Body of pancreas (tissue), 4 donors: ENCODE measurements at regions of chr1 and their contacts with region 1.

Region 1: DNA sequence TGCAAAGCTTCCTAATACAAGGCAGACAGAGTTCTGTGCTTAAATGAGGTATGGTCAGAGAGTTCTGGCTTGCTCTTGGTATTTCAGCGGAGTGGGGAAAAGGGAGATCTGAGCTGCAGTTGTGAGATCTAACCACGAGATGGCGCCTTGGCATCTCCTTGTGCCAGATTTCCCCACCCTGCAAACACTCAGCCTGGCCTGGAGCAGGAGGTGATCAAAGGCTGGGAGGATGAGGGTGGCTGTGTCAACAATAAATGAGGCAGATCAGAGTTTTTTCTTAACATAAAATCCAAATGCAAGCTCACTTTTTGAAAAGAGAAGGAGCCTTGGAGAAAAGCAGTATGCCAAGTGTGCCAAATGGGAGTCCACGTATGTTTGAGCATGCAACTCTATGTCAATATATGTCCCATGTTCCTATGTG is 4.1 kb upstream of the TFAP2E start:
- DNase-seq: peak; percentile 71 to 78 (median 72)
- ATAC-seq: peak; percentile 76
- H3K4me3 ChIP-seq: no peak overlapping the region
- H3K27ac ChIP-seq: no peak overlapping the region
- H3K4me1 ChIP-seq: peaks cover 13% of the 10 kb centered on the region
- H3K27me3 ChIP-seq: no peaks in the 10 kb centered on the region
- CTCF ChIP-seq: peak; percentile 65 to 91 (median 89)
- POLR2A ChIP-seq: no peak

Region 2: DNA sequence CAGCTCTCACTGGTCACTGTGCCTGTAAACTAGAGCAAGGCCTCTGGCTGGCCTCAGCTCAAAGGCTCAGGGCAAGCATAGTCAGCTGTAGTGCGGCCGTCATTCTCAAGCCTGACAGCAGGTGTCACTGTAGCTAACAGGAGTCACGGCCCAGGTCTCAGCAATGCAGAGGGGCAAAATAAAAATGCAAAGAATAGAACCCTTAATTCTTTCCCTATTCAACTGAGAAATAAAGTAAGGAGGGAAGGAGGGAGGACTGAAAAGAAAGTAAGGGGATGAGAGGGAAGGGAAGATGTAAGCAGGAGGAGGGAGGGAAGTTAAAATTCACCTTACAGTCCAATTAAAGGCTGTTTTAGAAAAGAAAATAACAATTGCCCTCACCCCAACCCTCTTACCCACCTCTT is 117.9 kb before region 1 on chr1:
- intact Hi-C with region 1: loop called (anchors 5 kb)
- DNase-seq: peak; percentile 87 to 93 (median 88)
- ATAC-seq: peak; percentile 76
- H3K4me3 ChIP-seq: no peak overlapping the region
- H3K27ac ChIP-seq: no peak overlapping the region
- H3K4me1 ChIP-seq: peaks cover 69% of the 10 kb centered on the region
- H3K27me3 ChIP-seq: no peaks in the 10 kb centered on the region
- CTCF ChIP-seq: peak; percentile 42 to 86 (median 86)
- POLR2A ChIP-seq: no peak

Region 3: GRCh38 chr1:35714921-35715567 is 146.1 kb after region 1 on chr1:
- intact Hi-C with region 1: loop called (anchors 5 kb)
- DNase-seq: no peak
- ATAC-seq: no peak
- H3K4me3 ChIP-seq: no peak overlapping the region
- H3K27ac ChIP-seq: no peak overlapping the region
- H3K4me1 ChIP-seq: peaks cover 23% of the 10 kb centered on the region
- H3K27me3 ChIP-seq: no peaks in the 10 kb centered on the region
- CTCF ChIP-seq: no peak
- POLR2A ChIP-seq: no peak

Region 4: GRCh38 chr1:35726450-35727433 is 157.8 kb after region 1 on chr1:
- intact Hi-C with region 1: loop called (anchors 5 kb)
- DNase-seq: peak; percentile 60 to 68 (median 67)
- ATAC-seq: peak; percentile 83
- H3K4me3 ChIP-seq: no peak overlapping the region
- H3K27ac ChIP-seq: no peak overlapping the region
- H3K4me1 ChIP-seq: peaks cover 7% of the 10 kb centered on the region
- H3K27me3 ChIP-seq: no peaks in the 10 kb centered on the region
- CTCF ChIP-seq: peak; percentile 71 to 86 (median 78)
- POLR2A ChIP-seq: no peak

Region 5: DNA sequence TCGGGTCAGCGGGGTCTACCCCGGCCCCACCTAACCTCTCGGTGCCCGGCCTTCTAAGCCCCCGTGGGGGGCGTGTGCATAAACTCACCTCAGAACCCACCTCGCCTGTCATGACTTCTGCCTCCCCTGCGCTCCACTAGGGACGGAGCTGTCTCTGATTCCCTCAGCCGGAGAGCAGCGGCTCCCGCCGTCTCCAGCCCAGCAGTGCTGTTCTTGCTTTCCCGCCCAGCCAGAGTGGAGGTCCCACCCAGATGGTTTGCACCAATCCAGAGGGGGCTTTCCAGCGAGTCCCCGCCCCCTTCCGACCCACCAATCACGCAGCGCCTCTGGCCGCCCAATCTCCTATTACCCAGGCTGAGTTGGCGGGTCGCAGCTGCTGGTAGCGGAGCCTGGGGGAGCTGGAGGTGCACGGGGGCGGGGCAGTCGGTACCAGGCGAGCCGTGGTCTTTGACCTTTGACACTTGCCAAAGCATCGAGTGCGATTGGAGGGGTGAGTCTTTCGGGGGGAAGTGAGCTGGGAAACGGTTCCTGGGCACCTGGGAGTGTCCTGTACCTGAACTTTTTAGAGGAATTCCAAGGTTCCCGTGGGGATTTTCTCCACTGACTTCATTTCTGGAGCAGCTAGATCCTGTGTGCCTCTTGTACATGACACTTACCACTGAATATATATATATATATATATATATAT is 200.9 kb after region 1 on chr1 and contains the start of gene CLSPN:
- intact Hi-C with region 1: loop called (anchors 5 kb)
- DNase-seq: peak; percentile 95 to 97 (median 96)
- ATAC-seq: peak; percentile 98
- H3K4me3 ChIP-seq: peak within 1 kb of the TSS; percentile 9 to 90
- H3K27ac ChIP-seq: peak within 1 kb of the TSS; percentile 33 to 89 (median 75)
- H3K4me1 ChIP-seq: peaks cover 4% of the 10 kb centered on the region
- H3K27me3 ChIP-seq: no peaks in the 10 kb centered on the region
- CTCF ChIP-seq: peak in 1 of 7 experiments; percentile 11
- POLR2A ChIP-seq: peak; percentile 11 to 54 (median 46)
- total RNA-seq, gene CLSPN: not detected